HepG2 (cell line): ENCODE measurements at regions of chr19 and their contacts with region 1.

Region 1: GRCh38 chr19:42132851-42133528 is 744 bp upstream of the POU2F2 start:
- DNase-seq: peak; percentile 10
- ATAC-seq: peak; percentile 73
- H3K4me3 ChIP-seq: peak overlapping the region in 1 of 3 experiments; percentile 37; a peak in 1 of 6 replicates
- H3K27ac ChIP-seq: no peak overlapping the region
- H3K4me1 ChIP-seq: no peaks in the 10 kb centered on the region
- H3K27me3 ChIP-seq: peaks cover 14 to 50% of the 10 kb centered on the region in 2 experiments
- CTCF ChIP-seq: peak; percentile 96
- EP300 ChIP-seq: no peak
- POLR2A ChIP-seq: no peak
- RAD21 ChIP-seq: peak; percentile 94

Region 2: DNA sequence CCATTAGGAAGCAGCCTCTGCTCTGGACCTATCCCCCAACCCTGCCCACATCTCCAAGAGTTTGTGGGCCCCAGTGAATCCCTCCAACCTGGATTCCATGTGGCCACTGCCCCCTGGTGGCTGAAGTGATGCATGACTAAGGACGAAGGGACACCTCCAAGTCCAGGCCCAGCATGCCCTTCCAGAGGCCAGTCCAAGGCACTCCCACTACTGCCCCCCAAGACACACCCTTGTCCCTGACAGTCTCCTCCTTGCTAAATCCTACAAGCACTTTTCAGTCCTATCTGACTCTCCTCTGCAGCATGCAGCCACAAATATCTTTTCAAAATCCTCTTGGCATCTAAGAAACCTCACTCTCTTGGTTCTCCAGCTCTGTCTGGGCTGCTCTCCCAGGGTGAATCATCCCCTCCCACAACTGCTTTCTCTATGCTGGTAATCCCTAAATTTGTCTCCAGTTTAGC is 51.4 kb after region 1 on chr19:
- CTCF ChIA-PET with region 1: interaction called, 21 read pairs
- POLR2A ChIA-PET with region 1: no interaction called
- in situ Hi-C with region 1: loop called (anchors 5 kb)
- intact Hi-C with region 1: loop called (anchors 2 kb)
- DNase-seq: peak; percentile 59
- ATAC-seq: peak; percentile 93
- H3K4me3 ChIP-seq: no peak overlapping the region
- H3K27ac ChIP-seq: no peak overlapping the region
- H3K4me1 ChIP-seq: no peaks in the 10 kb centered on the region
- H3K27me3 ChIP-seq: peaks cover 5 to 36% of the 10 kb centered on the region in 2 experiments; a peak in 3 of 5 replicates
- CTCF ChIP-seq: peak; percentile 91
- EP300 ChIP-seq: no peak
- POLR2A ChIP-seq: no peak
- RAD21 ChIP-seq: peak; percentile 78

Region 3: DNA sequence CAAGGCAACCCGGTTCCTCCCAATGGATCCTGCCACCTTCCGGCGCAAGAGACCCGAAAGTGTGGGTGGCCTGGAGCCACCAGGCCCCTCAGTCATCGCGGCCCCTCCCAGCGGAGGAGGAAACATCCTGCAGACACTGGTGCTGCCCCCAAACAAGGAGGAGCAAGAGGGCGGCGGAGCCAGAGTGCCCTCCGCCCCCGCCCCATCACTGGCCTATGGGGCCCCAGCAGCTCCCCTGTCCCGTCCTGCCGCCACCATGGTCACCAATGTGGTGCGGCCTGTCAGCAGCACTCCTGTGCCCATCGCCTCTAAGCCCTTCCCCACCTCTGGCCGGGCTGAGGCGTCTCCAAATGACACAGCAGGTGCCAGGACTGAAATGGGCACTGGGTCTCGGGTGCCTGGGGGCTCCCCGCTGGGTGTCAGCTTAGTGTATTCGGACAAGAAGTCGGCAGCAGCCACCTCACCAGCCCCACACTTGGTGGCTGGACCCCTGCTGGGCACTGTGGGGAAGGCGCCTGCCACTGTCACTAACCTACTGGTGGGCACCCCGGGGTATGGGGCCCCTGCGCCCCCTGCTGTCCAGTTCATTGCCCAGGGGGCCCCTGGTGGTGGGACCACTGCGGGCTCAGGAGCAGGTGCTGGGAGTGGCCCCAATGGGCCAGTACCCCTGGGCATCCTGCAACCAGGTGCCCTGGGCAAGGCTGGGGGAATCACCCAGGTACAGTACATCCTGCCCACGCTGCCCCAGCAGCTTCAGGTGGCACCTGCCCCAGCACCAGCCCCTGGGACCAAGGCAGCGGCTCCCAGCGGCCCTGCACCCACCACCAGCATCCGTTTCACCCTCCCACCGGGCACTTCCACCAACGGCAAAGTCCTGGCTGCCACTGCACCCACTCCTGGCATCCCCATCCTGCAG is 157.8 kb after region 1 on chr19:
- CTCF ChIA-PET with region 1: interaction called, 9 read pairs
- POLR2A ChIA-PET with region 1: no interaction called
- in situ Hi-C with region 1: loop called (anchors 5 kb)
- intact Hi-C with region 1: loop called (anchors 2 kb)
- DNase-seq: peak; percentile 61
- ATAC-seq: peak; percentile 81
- H3K4me3 ChIP-seq: no peak overlapping the region
- H3K27ac ChIP-seq: no peak overlapping the region
- H3K4me1 ChIP-seq: peaks cover 6% of the 10 kb centered on the region
- H3K27me3 ChIP-seq: no peaks in the 10 kb centered on the region
- CTCF ChIP-seq: peak; percentile 64
- EP300 ChIP-seq: no peak
- POLR2A ChIP-seq: 0 out of 4 replicates have a peak, but pooled peaks of 1 of the 2 experiments have one; percentile 33
- RAD21 ChIP-seq: peak; percentile 93

Region 4: DNA sequence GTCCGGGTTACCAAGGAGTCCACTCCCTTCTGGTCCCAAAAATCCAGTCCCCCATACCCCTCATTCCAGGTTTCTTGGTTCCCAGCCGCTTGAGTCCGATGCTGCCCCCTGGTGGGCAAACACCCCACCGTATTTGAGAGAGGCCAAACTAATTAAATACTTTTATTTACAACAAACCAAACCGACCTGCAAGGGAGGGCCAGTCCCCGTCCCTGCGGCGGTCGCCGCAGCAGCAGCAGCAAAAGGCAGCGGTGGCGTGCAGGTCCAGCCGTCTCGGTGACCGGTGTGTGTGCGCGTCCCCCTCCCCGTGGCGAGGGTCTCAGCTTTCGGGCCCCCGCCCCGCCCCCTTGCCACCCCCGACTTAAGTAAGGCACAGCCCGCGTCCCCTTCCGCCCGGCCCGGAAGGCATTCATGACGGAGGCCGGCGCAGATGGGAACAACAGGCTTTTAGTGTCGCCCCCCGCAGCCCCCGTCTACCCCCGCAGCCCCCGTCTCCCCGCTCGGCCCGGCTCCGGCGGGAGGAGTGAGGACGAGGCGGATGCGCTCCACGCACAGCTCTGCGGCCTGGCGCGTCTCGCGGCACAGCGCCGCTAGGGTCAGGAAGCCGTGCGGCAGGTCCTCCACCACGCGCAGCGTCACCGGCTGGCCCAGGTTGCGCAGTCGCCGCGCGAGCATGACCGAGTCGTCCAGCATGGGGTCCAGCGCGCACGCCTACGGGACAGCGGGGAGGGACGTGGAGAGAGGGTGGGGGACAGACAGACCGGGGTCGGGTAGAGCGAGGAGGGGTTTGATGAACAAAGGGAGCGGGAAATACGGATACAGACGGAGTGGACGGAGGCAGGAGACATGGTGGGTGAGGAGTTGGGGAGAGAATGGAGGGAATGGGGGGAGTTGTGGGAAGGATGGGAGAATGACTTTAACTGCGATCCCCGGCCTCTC is 268.6 kb after region 1 on chr19:
- CTCF ChIA-PET with region 1: no interaction called
- POLR2A ChIA-PET with region 1: no interaction called
- in situ Hi-C with region 1: no loop called
- intact Hi-C with region 1: loop called (anchors 5 kb)
- DNase-seq: peak; percentile 49
- ATAC-seq: peak; percentile 84
- H3K4me3 ChIP-seq: peak overlapping the region; percentile 49 to 72 (median 63); a peak in 5 of 6 replicates
- H3K27ac ChIP-seq: no peak overlapping the region
- H3K4me1 ChIP-seq: peaks cover 20% of the 10 kb centered on the region
- H3K27me3 ChIP-seq: peaks cover 7 to 45% of the 10 kb centered on the region in 2 experiments
- CTCF ChIP-seq: peak; percentile 71
- EP300 ChIP-seq: no peak
- POLR2A ChIP-seq: no peak
- RAD21 ChIP-seq: peak; percentile 24; the same call in 1 of the 2 replicates